Left ventricle myocardium superior (tissue), 1 donor: ENCODE measurements at regions of chr3 and their contacts with region 1.

Region 1: DNA sequence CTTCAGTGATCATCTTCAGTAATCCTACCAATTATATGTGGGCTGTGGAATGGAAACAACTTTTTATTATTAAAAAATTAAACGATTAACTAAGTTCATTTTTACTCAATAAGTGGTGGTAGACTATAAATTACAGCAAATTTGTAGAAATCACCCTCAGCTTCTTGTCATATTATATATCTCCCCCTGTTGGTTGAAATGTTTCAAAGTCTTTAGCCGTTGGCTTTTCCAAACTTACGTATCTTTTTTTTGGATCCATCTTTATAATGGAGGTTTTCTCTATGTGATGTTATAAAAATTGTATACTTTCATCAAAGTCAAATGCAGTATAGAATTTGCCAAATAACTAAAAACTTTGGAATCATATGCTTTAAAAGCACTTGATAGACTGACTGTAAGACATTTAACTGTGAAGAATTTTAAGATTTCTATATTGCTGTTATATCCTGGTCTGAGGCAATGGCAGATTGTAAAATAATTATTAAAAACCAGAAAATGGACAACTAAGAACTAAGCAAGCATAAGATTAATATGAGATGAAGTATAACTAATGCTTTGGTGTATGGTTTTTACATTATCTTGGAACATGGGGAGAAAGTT is 44.7 kb downstream of the ATP11B start:
- DNase-seq: no peak
- ATAC-seq: no peak

Region 2: DNA sequence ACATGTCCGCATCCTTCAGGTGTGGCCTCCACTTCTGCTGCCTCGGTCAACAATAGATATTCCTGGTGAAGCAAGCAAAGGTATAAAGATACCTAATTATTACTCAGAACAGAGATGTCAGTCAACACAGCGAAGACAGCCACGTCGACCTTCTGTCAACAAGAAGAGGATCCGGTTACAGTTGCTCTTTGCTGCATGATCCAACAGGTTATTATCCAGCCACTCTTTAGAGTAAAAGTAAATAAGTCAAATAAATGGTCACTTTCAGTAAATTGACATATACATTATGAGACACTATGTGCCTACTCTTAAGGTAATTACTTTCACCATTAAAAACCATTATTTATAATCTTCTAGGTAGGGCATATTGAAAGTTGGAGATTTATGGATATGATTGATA is 401.4 kb before region 1 on chr3:
- intact Hi-C with region 1: no loop called
- DNase-seq: no peak
- ATAC-seq: no peak

Region 3: GRCh38 chr3:182713743-182714517 is 124.0 kb before region 1 on chr3:
- intact Hi-C with region 1: loop called (anchors 2 kb)
- DNase-seq: no peak
- ATAC-seq: peak; percentile 86

Region 4: DNA sequence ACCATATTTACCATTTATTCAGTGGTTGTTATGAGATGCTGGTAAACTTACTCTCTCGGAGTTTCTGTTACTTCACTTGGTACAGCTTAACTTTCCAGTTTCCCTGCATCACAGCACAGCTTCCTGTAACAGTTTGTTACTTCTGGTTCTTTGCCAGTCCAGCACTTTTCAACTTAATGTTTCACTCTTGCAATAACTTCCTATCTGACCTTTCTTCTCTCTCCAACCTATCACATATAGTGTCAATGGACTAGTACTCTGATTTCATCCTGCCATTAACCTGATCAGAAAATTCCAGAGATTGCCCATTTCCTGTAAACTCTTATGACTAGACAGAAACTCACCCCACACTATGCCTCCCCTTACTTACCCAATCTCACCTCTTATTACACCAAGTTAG is 48.6 kb before region 1 on chr3:
- intact Hi-C with region 1: loop called (anchors 10 kb)
- DNase-seq: no peak
- ATAC-seq: no peak